HEK293 (cell line): ENCODE measurements at regions of chr1 and their contacts with region 1.

Region 1: DNA sequence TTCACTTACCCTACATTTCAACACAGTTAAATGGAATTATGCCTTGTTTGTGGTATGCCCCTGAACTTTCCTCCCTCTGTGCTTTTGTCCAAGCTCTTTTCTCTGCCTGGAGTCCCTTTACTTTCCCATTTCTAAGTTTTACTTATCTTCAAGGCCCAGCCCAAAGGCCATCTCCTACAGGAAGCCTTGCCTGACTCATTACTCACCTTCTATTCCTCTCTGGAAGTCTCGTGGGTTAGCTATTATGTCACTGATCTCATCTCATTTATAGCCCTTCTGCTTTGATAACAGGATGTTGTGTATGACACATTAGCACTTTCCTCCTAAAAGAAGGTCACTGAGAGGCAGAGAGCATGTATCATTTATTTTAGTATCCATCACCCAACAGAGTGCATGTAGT is 78.8 kb upstream of the CD1D start:
- H3K4me3 ChIP-seq: no peak overlapping the region
- H3K27ac ChIP-seq: no peak overlapping the region
- H3K4me1 ChIP-seq: no peaks in the 10 kb centered on the region
- CTCF ChIP-seq: no peak

Region 2: GRCh38 chr1:158117854-158118704 is 16.2 kb after region 1 on chr1:
- CTCF ChIA-PET with region 1: interaction called, 262 read pairs
- POLR2A ChIA-PET with region 1: no interaction called
- H3K4me3 ChIP-seq: no peak overlapping the region
- H3K27ac ChIP-seq: no peak overlapping the region
- H3K4me1 ChIP-seq: no peaks in the 10 kb centered on the region; the same call in 1 of the 2 replicates
- CTCF ChIP-seq: peak; percentile 62